GM13977 (cell line): ENCODE measurements at regions of chr11 and their contacts with region 1.

Region 1: GRCh38 chr11:9534791-9535781 is 38.4 kb upstream of the WEE1 start:
- DNase-seq: peak; percentile 72
- CTCF ChIP-seq: peak; percentile 84

Region 2: DNA sequence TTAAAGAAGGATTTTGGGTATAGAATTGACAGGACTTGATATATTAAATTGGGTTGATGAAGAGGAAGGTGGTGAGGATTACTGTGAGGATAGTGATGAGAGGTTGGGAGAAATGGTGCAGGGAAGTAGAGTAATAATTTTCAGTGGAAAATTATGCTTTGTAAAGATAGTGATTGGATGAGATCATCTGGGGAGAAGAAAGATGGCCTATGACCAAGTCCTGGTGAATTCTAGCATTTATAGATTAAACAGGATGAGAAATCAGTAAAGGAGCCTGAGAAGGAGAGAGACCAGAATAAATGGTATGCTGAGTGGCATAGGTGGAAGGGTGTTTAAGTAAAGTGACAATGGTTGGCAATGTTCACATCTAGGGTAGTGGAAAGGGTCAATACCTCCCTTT is 135.6 kb before region 1 on chr11:
- in situ Hi-C with region 1: no loop called
- DNase-seq: no peak
- CTCF ChIP-seq: no peak

Region 3: DNA sequence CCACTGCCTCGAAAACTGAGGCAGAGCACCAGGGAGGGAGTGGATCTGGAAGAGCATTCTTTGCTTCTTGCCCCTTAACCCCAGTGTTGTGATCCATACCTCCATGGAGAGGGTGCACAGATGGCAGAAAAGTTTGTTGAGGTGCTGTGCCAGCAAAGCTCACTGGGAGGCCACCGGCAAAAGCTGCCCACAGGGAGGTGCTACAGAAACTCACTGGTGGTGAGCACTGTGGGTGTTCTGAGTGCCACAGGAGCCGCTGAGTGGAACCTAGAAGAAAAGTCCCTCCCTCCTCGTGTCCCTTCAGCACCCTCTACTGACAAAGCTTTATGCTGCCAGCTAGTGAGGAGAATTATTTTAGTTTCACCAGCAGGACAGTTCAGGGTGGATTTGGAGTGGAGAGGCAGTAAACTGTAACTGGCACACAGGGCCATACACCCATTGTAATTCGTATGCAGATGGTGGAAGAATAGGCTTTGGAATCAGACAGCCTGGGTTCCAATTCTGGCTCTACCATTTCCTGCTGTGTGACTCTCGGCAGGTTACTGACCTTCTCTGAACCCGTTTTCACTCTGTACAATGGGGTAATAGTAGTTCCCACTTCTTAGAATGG is 213.4 kb after region 1 on chr11:
- in situ Hi-C with region 1: loop called (anchors 10 kb)
- DNase-seq: peak; percentile 71
- CTCF ChIP-seq: peak; percentile 76